A673 (cell line): ENCODE measurements at regions of chr1 and their contacts with region 1.

Region 1: GRCh38 chr1:203267347-203267846 is 37.9 kb upstream of the BTG2 start:
- DNase-seq: peak; percentile 95
- H3K4me3 ChIP-seq: peak overlapping the region; percentile 52
- H3K27ac ChIP-seq: peak overlapping the region; percentile 39
- H3K4me1 ChIP-seq: peaks cover 16% of the 10 kb centered on the region
- H3K27me3 ChIP-seq: no peaks in the 10 kb centered on the region
- CTCF ChIP-seq: peak; percentile 94

Region 2: GRCh38 chr1:202770135-202770534 is 497.3 kb before region 1 on chr1:
- CTCF ChIA-PET with region 1: no interaction called
- POLR2A ChIA-PET with region 1: no interaction called
- intact Hi-C with region 1: no loop called
- DNase-seq: no peak
- H3K4me3 ChIP-seq: no peak overlapping the region
- H3K27ac ChIP-seq: no peak overlapping the region
- H3K4me1 ChIP-seq: no peaks in the 10 kb centered on the region
- H3K27me3 ChIP-seq: no peaks in the 10 kb centered on the region
- CTCF ChIP-seq: no peak

Region 3: DNA sequence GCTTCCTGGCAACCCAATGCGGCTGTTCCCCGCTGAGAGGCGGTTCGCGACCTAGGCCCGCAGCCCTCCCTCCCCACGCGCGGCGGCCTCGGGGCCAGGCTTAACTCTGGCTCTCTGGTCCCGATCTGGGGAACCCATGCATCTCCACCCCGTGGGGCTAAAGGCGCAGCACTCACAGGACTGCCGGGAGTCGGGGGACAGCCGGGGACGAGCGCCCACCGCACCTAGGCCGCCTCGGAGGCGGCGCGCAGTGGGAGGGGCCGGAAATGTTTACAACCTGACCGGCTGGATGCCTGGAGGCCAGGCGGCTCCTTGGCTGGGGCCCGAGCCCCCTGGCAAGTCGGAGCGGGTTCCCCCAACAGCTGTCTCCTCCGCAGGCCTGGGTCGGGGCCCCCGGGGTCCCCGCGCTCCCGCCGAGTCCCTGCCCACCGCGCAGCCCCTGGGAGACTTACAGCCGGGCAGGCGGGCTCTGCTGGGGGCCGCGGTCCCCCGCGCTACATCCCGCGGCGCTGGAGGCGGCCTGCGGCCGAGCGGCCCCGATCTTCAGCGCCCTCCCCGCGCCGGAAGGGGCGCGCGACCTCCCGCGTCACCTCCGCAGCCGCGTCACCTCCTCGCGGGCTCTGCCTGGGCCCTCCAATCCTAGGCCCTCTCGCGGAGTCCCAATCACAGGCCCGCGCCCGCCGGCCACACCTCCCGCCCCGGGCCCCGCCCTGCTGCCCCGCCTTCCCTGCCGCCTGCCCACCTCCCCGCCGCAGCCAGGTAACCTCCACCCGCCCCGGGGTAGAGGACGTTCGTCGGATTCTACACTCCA is 309.5 kb before region 1 on chr1 and contains the start of gene ADIPOR1:
- CTCF ChIA-PET with region 1: no interaction called
- POLR2A ChIA-PET with region 1: no interaction called
- intact Hi-C with region 1: no loop called
- DNase-seq: peak; percentile 91
- H3K4me3 ChIP-seq: peak within 1 kb of the TSS; percentile 99
- H3K27ac ChIP-seq: peak within 1 kb of the TSS; percentile 97
- H3K4me1 ChIP-seq: peaks cover 13% of the 10 kb centered on the region
- H3K27me3 ChIP-seq: no peaks in the 10 kb centered on the region
- CTCF ChIP-seq: no peak
- total RNA-seq, gene ADIPOR1: 79.1 and 81.4 TPM in 2 replicates

Region 4: DNA sequence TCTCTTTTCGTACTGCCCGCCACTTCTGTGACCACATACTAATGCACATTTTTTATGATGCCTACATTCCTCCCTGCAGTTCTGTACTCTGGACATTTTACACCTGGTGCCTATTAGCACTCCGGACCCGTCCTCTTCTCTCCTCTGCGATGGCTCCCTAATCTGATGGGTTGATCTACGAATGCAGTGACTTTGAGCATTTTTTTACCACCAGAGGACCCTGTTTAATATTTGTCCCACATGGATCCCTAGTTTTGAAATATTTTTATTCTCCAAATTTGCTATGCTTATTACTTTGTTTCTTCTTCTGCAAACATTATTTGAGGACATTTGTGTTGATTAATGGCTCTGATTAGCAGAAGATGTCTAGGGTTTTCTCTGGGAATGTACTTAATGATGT is 235.9 kb before region 1 on chr1:
- CTCF ChIA-PET with region 1: interaction called, 9 read pairs
- POLR2A ChIA-PET with region 1: no interaction called
- intact Hi-C with region 1: loop called (anchors 2 kb)
- DNase-seq: peak; percentile 33
- H3K4me3 ChIP-seq: no peak overlapping the region
- H3K27ac ChIP-seq: no peak overlapping the region
- H3K4me1 ChIP-seq: peaks cover 5% of the 10 kb centered on the region
- H3K27me3 ChIP-seq: no peaks in the 10 kb centered on the region
- CTCF ChIP-seq: peak; percentile 76

Region 5: GRCh38 chr1:203326830-203327683 is 59.7 kb after region 1 on chr1:
- CTCF ChIA-PET with region 1: interaction called, 14 read pairs
- POLR2A ChIA-PET with region 1: no interaction called
- intact Hi-C with region 1: no loop called
- DNase-seq: peak; percentile 95
- H3K4me3 ChIP-seq: peak overlapping the region; percentile 52
- H3K27ac ChIP-seq: peak overlapping the region; percentile 81
- H3K4me1 ChIP-seq: peaks cover 39% of the 10 kb centered on the region
- H3K27me3 ChIP-seq: no peaks in the 10 kb centered on the region
- CTCF ChIP-seq: no peak

Region 6: DNA sequence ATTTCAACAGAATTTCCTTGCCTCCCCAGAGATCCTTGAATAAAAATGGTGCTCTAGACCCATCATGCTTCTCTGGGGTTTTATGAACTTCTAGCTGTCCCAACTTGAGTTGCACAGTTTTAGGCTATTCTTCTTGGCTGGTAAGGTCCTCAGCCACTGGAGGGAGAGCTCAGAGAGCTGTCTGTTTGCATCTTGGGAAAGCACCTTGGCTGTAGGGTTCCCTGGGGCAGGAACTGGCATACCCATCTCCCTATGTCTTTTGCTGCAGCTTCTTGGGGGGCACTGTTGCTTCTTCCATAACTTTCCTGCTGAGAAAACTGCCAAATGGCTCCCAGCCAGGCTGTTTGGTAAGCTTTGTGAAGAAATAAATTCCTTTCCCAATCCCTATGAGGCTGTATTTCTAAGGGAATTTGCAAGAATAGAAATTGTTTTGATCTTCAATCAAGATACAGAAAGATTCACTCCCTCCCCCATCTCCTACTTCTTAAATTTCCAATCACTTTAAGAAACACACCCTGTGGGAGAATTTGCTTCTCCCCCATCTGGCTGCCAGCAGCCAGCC is 91.7 kb after region 1 on chr1:
- CTCF ChIA-PET with region 1: no interaction called
- POLR2A ChIA-PET with region 1: no interaction called
- intact Hi-C with region 1: no loop called
- DNase-seq: no peak
- H3K4me3 ChIP-seq: no peak overlapping the region
- H3K27ac ChIP-seq: no peak overlapping the region
- H3K4me1 ChIP-seq: no peaks in the 10 kb centered on the region
- H3K27me3 ChIP-seq: peaks cover 7% of the 10 kb centered on the region
- CTCF ChIP-seq: no peak